ENCODE measurements at regions of chr7 and their contacts with region 1.

Region 1: DNA sequence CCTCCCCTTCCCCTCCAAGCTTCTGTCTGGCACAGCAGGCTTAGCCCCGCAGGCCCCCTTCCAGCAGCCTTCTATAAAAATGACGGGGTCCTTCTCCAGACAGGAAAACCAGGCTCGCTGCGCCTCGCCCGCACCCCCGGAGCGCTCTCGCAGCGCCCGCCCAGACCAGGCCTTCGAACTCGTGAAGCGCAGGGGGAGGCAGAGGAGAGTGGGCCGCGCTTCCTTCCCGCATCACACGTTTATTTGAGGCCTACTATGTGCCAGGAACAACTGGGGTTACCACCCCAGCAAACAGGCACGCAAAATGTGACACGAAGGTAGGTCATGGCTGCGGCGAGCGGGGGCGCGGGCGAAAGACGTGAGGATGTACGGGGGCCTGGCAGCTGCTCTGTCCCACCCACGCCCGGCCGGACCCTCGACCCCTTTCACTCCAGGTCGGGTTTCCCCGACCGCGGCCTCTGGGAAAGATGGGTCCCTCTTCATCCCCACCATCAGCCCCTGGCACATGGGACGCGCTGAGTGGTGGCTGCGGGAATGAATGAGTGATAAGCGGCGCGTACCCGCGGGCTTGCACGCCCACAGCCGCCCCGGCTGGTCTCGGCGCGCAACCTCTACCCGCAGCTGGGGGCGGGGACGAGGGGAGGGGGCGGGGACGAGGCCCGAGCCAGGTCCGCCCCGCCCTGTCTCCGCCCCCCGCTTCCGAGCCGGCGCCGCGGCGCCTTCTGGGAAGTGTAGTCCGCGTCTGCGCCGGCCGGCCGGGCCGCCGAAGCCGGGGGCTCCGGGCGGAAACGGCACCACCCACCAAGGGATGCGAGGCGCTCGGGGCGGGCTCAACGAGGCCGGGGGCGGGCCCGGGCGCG is 59.1 kb downstream of the ZNF467 start:
- DNase-seq: peak; percentile 84 to 97 (median 94)
- ATAC-seq: peak; percentile 91
- H3K4me3 ChIP-seq: peak overlapping the region; percentile 80
- H3K4me3 Mint-ChIP-seq: peak overlapping the region; percentile 86
- H3K27ac ChIP-seq: no peak overlapping the region
- H3K27ac Mint-ChIP-seq: peak overlapping the region; percentile 66
- H3K4me1 ChIP-seq: peaks cover 29% of the 10 kb centered on the region
- H3K4me1 Mint-ChIP-seq: peaks cover 21% of the 10 kb centered on the region
- H3K27me3 ChIP-seq: no peaks in the 10 kb centered on the region
- H3K27me3 Mint-ChIP-seq: no peaks in the 10 kb centered on the region
- CTCF ChIP-seq: no peak

Region 2: GRCh38 chr7:149147072-149147751 is 567.1 kb before region 1 on chr7 and contains the start of gene ZNF398:
- CTCF ChIA-PET with region 1: no interaction called
- POLR2A ChIA-PET with region 1: interaction called, 3 read pairs
- intact Hi-C with region 1: loop called in 1 of 2 experiments (anchors 10 kb)
- DNase-seq: peak; percentile 70 to 94 (median 79)
- ATAC-seq: peak; percentile 70
- H3K4me3 ChIP-seq: peak within 1 kb of the TSS; percentile 89
- H3K4me3 Mint-ChIP-seq: peak within 1 kb of the TSS; percentile 89
- H3K27ac ChIP-seq: peak within 1 kb of the TSS; percentile 84 to 85
- H3K27ac Mint-ChIP-seq: peak within 1 kb of the TSS; percentile 85
- H3K4me1 ChIP-seq: peaks cover 48% of the 10 kb centered on the region
- H3K4me1 Mint-ChIP-seq: peaks cover 47% of the 10 kb centered on the region
- H3K27me3 ChIP-seq: no peaks in the 10 kb centered on the region
- H3K27me3 Mint-ChIP-seq: no peaks in the 10 kb centered on the region
- CTCF ChIP-seq: peak; percentile 38
- total RNA-seq, gene ZNF398: 14.0 to 15.0 TPM

Region 3: GRCh38 chr7:149624419-149625339 is 89.6 kb before region 1 on chr7:
- CTCF ChIA-PET with region 1: interaction called, 7 read pairs
- POLR2A ChIA-PET with region 1: interaction called, 10 read pairs
- intact Hi-C with region 1: loop called in 1 of 2 experiments (anchors 1 kb)
- DNase-seq: peak; percentile 79 to 97 (median 88)
- ATAC-seq: peak; percentile 88
- H3K4me3 ChIP-seq: peak overlapping the region; percentile 83
- H3K4me3 Mint-ChIP-seq: peak overlapping the region; percentile 98
- H3K27ac ChIP-seq: peak overlapping the region in 1 of 2 donors; percentile 41
- H3K27ac Mint-ChIP-seq: peak overlapping the region; percentile 70
- H3K4me1 ChIP-seq: peaks cover 47% of the 10 kb centered on the region
- H3K4me1 Mint-ChIP-seq: peaks cover 40% of the 10 kb centered on the region
- H3K27me3 ChIP-seq: no peaks in the 10 kb centered on the region
- H3K27me3 Mint-ChIP-seq: peaks cover 3% of the 10 kb centered on the region
- CTCF ChIP-seq: peak; percentile 88

Region 4: DNA sequence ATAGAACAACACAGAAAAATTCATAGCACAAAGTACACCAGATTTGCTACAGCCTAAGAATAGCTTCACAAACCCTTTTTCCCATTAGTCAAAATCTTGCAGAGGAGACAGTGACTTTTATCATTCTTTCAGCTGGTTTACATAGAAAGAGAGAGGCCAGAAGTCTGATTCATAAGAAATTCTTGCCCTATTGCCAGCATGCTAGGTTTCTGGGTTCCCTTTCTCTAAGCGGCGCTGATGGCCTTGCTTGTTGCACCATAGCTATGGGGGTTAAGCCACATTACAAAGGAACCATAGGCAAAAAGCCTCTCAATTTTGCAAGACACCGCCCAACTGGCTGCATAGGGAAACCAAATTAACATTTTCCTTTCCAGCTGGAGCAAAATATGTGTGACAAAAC is 28.3 kb before region 1 on chr7:
- CTCF ChIA-PET with region 1: no interaction called
- POLR2A ChIA-PET with region 1: no interaction called
- intact Hi-C with region 1: no loop called
- DNase-seq: no peak
- ATAC-seq: no peak
- H3K4me3 ChIP-seq: no peak overlapping the region
- H3K4me3 Mint-ChIP-seq: no peak overlapping the region
- H3K27ac ChIP-seq: no peak overlapping the region
- H3K27ac Mint-ChIP-seq: no peak overlapping the region
- H3K4me1 ChIP-seq: no peaks in the 10 kb centered on the region
- H3K4me1 Mint-ChIP-seq: no peaks in the 10 kb centered on the region
- H3K27me3 ChIP-seq: peaks cover 32 to 34% of the 10 kb centered on the region in 2 experiments
- H3K27me3 Mint-ChIP-seq: peaks cover 80% of the 10 kb centered on the region
- CTCF ChIP-seq: no peak

Region 5: GRCh38 chr7:149838224-149838947 is 124.1 kb after region 1 on chr7 and contains the start of gene ZNF862:
- CTCF ChIA-PET with region 1: no interaction called
- POLR2A ChIA-PET with region 1: no interaction called
- intact Hi-C with region 1: loop called in 1 of 2 experiments (anchors 2 kb)
- DNase-seq: peak; percentile 90 to 99 (median 95)
- ATAC-seq: peak; percentile 97
- H3K4me3 ChIP-seq: peak within 1 kb of the TSS; percentile 86
- H3K4me3 Mint-ChIP-seq: peak within 1 kb of the TSS; percentile 98
- H3K27ac ChIP-seq: peak within 1 kb of the TSS; percentile 1 to 72
- H3K27ac Mint-ChIP-seq: peak within 1 kb of the TSS; percentile 84
- H3K4me1 ChIP-seq: peaks cover 17% of the 10 kb centered on the region
- H3K4me1 Mint-ChIP-seq: peaks cover 44% of the 10 kb centered on the region
- H3K27me3 ChIP-seq: no peaks in the 10 kb centered on the region
- H3K27me3 Mint-ChIP-seq: no peaks in the 10 kb centered on the region
- CTCF ChIP-seq: no peak
- total RNA-seq, gene ZNF862: 25.6 to 26.6 TPM

Region 6: DNA sequence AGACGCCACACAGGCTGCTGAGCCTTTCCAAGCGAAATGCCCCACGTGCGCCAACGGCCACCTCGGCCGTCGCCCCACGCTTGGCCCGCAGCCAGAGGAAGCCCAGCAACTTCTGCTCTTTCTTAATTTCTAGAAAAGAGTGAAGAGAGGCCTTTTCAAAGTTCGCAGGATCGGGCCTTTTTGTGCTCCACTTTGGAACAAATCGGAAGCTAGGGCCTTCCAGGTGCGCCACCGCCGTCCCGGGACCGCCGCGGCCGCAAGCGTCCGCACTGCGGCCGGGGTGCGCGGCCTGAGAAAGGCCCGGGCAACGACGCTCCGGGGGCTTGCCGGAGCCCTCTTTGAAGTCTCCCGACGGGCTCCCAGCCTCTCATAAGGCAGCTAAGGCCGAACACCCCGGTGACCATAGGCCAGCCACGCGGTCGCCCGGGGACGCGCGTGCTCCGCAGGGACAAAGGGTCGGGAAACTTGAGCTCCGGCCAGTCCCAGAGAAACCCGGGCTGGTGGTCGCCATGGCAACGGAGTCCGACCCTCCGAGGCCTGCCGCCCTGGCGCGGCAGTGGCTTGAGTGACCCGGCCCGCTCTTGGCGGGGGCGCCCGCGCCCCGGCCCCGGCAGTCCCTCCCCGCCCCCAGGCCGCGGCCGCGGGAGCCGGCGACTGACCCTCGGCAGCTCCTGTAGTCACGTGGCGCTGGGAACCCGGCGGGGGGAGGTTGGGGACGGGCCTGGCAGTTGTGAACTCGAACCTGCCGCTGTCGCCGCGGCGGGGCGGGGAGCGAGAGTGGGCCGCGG is 654.0 kb after region 1 on chr7 and contains the start of gene REPIN1:
- CTCF ChIA-PET with region 1: no interaction called
- POLR2A ChIA-PET with region 1: no interaction called
- intact Hi-C with region 1: loop called in 1 of 2 experiments (anchors 10 kb)
- DNase-seq: peak; percentile 58 to 91 (median 73)
- ATAC-seq: peak; percentile 45
- H3K4me3 ChIP-seq: peak within 1 kb of the TSS; percentile 83
- H3K4me3 Mint-ChIP-seq: peak within 1 kb of the TSS; percentile 99
- H3K27ac ChIP-seq: peak within 1 kb of the TSS; percentile 40 to 80
- H3K27ac Mint-ChIP-seq: peak within 1 kb of the TSS; percentile 96
- H3K4me1 ChIP-seq: peaks cover 47% of the 10 kb centered on the region
- H3K4me1 Mint-ChIP-seq: peaks cover 61% of the 10 kb centered on the region
- H3K27me3 ChIP-seq: no peaks in the 10 kb centered on the region
- H3K27me3 Mint-ChIP-seq: no peaks in the 10 kb centered on the region
- CTCF ChIP-seq: no peak
- total RNA-seq, gene REPIN1: 58.2 to 59.8 TPM

Region 7: DNA sequence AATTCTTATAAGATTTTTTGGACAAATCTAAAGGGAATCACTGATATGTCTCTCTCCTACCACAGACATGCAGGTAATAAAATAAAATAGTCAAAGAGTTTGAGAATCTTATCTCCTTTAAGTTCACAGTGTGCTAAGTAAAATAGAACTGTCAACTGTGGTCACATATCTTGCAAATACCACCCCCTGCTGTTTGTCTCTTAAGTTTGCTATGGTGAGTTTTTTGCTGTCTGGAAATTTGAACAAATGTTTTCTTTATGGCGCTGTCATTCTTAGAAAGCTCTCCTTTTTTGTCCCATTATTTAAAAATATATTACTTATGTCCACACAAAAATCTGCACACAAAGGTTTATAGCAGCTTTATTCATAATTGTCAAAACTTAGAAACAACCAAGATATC is 1042.6 kb after region 1 on chr7:
- CTCF ChIA-PET with region 1: no interaction called
- POLR2A ChIA-PET with region 1: no interaction called
- intact Hi-C with region 1: no loop called
- DNase-seq: peak in 4 of 14 experiments; percentile 34 to 84 (median 81)
- ATAC-seq: peak; percentile 39
- H3K4me3 ChIP-seq: no peak overlapping the region
- H3K4me3 Mint-ChIP-seq: peak overlapping the region; percentile 87
- H3K27ac ChIP-seq: no peak overlapping the region
- H3K27ac Mint-ChIP-seq: peak overlapping the region; percentile 99
- H3K4me1 ChIP-seq: peaks cover 44% of the 10 kb centered on the region
- H3K4me1 Mint-ChIP-seq: peaks cover 54% of the 10 kb centered on the region
- H3K27me3 ChIP-seq: no peaks in the 10 kb centered on the region
- H3K27me3 Mint-ChIP-seq: peaks cover 5% of the 10 kb centered on the region
- CTCF ChIP-seq: peak; percentile 72

Region 8: DNA sequence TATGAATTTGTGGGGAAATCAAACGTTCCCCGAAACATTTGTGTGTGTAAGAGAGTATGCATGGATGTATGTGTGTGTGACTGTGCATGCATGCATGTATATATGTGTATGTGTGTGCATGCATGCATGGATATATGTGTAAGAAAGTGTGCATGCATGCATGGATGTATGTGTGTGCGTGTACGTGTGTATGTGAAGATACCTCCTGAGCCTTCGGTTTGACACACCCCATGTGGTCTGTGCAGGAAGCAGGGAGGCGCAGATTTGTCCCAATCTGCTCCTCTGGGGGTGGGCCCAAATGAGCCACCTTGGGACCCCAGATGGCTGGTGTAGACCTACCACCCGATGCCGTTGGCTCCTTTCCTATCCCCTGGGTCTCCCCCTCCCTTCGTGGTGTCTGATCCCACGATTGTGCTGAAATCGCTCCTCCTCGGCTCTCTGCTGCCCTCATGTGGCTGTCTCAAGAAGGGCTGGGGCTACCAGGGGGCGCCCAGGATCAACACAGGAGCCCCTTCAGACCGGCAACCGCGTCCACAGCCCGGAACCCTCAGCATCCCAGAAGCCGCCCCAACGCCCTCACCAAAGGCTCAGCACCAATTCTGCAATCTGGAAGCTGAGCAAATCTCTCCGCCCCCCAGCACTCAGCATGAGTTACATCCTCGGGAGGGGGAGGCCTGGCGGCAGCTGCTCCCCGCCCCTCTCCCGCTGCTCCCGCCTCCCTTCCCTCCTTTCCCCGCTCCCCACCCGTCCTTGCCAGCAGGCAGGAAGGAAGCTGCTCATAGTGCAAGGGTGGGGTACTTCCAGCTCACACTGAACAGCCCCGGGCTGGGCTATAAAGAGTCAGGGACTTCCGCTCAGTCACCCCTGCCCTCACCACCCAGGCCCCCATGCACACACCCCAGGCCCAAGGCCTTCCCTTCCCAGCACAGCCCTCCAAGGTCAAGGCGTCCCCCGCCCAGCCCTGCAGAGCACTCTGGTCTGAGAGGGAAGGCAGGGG is 1274.2 kb after region 1 on chr7:
- CTCF ChIA-PET with region 1: no interaction called
- POLR2A ChIA-PET with region 1: no interaction called
- intact Hi-C with region 1: loop called in 1 of 2 experiments (anchors 10 kb)
- DNase-seq: peak; percentile 46 to 83 (median 64)
- ATAC-seq: peak; percentile 76
- H3K4me3 ChIP-seq: peak overlapping the region; percentile 28
- H3K4me3 Mint-ChIP-seq: peak overlapping the region; percentile 63
- H3K27ac ChIP-seq: peak overlapping the region in 1 of 2 donors; percentile 33
- H3K27ac Mint-ChIP-seq: no peak overlapping the region
- H3K4me1 ChIP-seq: peaks cover 42% of the 10 kb centered on the region
- H3K4me1 Mint-ChIP-seq: peaks cover 38% of the 10 kb centered on the region
- H3K27me3 ChIP-seq: no peaks in the 10 kb centered on the region
- H3K27me3 Mint-ChIP-seq: peaks cover 4% of the 10 kb centered on the region
- CTCF ChIP-seq: peak; percentile 90

Region 9: GRCh38 chr7:151080522-151081169 is 1366.4 kb after region 1 on chr7 and contains the start of gene FASTK:
- CTCF ChIA-PET with region 1: no interaction called
- POLR2A ChIA-PET with region 1: no interaction called
- intact Hi-C with region 1: loop called in 1 of 2 experiments (anchors 5 kb)
- DNase-seq: peak; percentile 73 to 95 (median 85)
- ATAC-seq: peak; percentile 63
- H3K4me3 ChIP-seq: peak within 1 kb of the TSS; percentile 98
- H3K4me3 Mint-ChIP-seq: peak within 1 kb of the TSS; percentile 92
- H3K27ac ChIP-seq: peak within 1 kb of the TSS; percentile 77 to 92
- H3K27ac Mint-ChIP-seq: peak within 1 kb of the TSS; percentile 85
- H3K4me1 ChIP-seq: peaks cover 52% of the 10 kb centered on the region
- H3K4me1 Mint-ChIP-seq: peaks cover 45% of the 10 kb centered on the region
- H3K27me3 ChIP-seq: no peaks in the 10 kb centered on the region
- H3K27me3 Mint-ChIP-seq: peaks cover 4% of the 10 kb centered on the region
- CTCF ChIP-seq: no peak
- total RNA-seq, gene FASTK: 82.2 to 84.2 TPM

Measured in CD4-positive, alpha-beta T cell (primary cell).